Right ventricle myocardium inferior (tissue), 1 donor: ENCODE measurements at regions of chr3 and their contacts with region 1.

Region 1: GRCh38 chr3:69231929-69232440 is 109.6 kb upstream of the LMOD3 start:
- DNase-seq: no peak
- ATAC-seq: peak; percentile 37

Region 2: DNA sequence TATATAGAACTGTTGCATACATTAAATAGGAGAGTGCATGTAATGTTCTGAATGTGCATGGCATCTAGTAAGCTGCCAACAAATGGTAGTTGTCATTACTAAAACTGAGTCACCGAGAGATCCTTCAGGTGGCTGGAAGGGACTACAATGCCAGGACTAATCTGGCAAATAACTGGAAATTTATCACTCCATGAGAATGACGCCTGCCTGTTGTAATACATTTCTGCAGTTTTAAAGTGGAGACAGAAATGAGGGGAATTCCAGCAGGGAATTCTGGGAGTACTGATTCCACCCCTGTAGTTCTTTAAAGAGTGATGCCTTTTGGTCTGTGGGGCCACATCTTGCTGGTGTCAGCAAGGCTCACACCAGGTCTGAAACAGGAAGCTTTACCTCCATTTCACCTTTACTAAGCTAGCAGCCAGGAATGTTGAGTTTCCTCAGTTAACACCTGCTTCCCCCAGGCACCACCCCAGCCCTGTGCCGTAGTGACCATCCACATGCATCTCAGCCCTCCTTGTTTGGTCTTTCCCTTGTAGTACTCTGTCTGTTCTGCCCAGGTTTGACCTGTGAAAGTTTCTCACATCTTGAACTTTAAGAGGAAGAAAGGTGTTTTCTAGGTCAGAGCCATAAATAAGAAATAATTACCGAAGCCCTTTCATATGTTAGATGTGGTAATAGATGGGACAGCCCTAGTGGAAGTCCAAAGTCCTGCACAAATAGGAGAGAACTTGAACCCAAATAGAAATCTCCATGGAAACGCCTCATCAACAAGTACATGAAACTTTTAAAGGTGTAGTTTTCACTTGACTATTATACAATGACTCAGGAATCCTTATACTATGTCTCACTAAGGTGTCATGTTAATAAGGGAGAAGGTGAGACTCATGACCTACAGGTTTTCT is 52.9 kb before region 1 on chr3:
- intact Hi-C with region 1: loop called (anchors 10 kb)
- DNase-seq: no peak
- ATAC-seq: no peak

Region 3: DNA sequence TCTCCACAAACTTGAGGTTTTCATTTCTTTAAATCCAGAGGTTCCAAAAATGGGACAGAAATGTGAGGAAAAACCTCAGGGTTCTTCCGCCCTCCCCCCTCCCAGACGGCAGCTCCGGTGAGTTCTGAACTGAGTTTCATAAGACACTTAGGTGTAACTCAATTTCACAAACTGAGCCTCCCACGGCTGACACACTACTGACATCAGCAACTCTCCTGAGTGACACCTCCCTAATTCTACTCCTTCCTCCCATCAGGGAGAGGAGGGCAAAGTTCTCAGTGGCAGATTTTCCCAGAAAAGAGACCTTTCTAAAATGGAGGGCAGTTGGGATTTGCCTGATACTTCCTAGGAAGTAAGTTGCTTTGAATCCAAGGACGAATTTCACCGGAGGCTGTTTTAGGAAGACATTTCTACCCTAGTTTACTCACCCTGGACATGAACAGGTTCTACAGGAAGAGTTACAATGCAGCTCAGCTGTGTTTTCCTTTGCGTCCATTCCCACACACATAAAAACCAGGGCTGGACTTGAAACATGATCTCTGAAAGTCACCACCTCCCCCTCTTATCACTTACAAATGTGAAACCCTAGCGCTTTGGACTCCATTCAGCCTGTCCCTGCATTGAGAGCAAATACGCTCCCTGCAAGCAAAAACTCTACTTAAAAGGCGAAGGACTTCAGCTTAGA is 31.5 kb before region 1 on chr3:
- intact Hi-C with region 1: no loop called
- DNase-seq: no peak
- ATAC-seq: peak; percentile 79